ENCODE measurements at regions of chrX and their contacts with region 1.

Region 1: DNA sequence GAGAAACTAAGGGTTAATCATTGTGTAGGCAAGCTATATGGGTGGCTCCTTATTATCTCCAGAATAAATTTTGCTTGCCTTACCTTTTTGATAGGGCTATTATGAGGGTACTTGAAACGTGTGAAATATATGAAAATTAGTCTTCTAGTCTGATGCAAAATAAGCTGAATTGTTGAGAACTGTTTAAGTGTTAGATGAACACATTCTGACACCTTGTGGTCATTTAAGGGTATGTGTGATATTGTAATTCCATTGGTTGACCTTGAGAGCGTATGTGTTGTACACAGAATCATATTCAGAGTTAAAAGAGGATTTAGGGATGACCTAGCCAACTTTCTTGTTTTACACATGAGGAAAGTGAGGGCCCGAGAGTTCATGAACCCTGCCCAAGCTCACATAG is 44.6 kb upstream of the LINC00632 start:
- DNase-seq: peak; percentile 59
- H3K4me3 Mint-ChIP-seq: no peak overlapping the region
- H3K27ac Mint-ChIP-seq: no peak overlapping the region
- H3K4me1 Mint-ChIP-seq: peaks cover 8% of the 10 kb centered on the region
- H3K27me3 Mint-ChIP-seq: peaks cover 33% of the 10 kb centered on the region
- CTCF ChIP-seq: peak; percentile 45

Region 2: GRCh38 chrX:140034916-140035315 is 630.0 kb before region 1 on chrX:
- CTCF ChIA-PET with region 1: interaction called, 6 read pairs
- POLR2A ChIA-PET with region 1: interaction called, 4 read pairs
- intact Hi-C with region 1: loop called (anchors 1 kb)
- DNase-seq: peak; percentile 33
- H3K4me3 Mint-ChIP-seq: no peak overlapping the region
- H3K27ac Mint-ChIP-seq: no peak overlapping the region
- H3K4me1 Mint-ChIP-seq: peaks cover 5% of the 10 kb centered on the region
- H3K27me3 Mint-ChIP-seq: peaks cover 21% of the 10 kb centered on the region
- CTCF ChIP-seq: peak; percentile 37

Region 3: DNA sequence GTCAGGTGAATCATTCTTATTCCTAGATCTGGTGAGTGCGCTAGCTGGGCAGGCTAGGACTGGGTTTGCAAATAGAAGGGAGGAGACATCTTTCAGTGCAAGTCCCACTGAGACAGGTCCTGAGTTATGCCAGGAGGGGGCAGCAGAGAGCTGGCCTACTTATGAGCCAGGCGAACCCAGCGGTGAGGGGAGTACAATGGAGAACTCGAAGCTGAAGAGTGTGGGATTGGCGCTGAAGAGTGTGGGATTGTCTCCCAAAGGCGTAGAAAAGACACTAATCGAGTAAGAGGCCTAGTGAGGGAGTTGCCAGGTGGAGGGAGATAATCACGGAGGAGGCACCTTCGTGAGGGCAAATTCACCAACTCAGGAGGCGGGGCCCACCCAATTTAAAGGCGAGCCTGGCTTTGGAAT is 607.9 kb before region 1 on chrX:
- CTCF ChIA-PET with region 1: interaction called, 221 read pairs
- POLR2A ChIA-PET with region 1: interaction called, 3 read pairs
- intact Hi-C with region 1: loop called (anchors 1 kb)
- DNase-seq: peak; percentile 86
- H3K4me3 Mint-ChIP-seq: no peak overlapping the region
- H3K27ac Mint-ChIP-seq: no peak overlapping the region
- H3K4me1 Mint-ChIP-seq: peaks cover 6% of the 10 kb centered on the region
- H3K27me3 Mint-ChIP-seq: peaks cover 15% of the 10 kb centered on the region
- CTCF ChIP-seq: peak; percentile 83

Region 4: DNA sequence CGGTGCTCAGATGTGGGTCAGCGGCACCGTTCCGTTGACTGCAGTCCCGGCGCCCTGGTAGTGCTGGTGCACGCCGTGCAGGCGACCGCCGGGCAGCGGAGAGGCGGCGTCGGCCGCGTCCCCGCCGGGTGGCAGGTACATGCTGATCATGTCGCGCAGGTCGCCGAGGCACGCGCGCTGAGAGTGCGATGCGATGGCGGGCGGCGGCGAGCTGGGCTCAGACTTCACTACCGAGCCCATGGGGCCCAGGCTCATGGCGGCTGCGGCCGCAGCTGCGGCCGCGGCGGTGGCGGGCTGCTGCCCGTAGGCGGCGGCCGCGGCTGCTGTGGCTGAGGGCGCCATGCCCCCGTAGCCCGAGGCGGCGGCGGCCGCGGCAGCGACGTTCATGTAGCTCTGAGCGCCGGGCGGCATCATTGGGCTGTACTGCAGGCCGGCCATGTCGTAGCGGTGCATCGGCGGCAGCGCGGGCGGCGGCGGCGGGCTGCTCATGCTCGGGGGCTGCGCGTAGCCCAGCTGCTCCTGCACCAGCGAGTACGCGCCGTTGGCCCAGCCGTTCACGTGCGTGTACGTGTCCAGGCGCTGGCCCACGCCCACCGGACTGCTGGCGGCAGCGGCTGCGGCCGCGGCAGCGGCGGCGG is 161.1 kb before region 1 on chrX:
- CTCF ChIA-PET with region 1: no interaction called
- POLR2A ChIA-PET with region 1: no interaction called
- intact Hi-C with region 1: no loop called
- DNase-seq: no peak
- H3K4me3 Mint-ChIP-seq: no peak overlapping the region
- H3K27ac Mint-ChIP-seq: no peak overlapping the region
- H3K4me1 Mint-ChIP-seq: peaks cover 6% of the 10 kb centered on the region
- H3K27me3 Mint-ChIP-seq: peaks cover 8% of the 10 kb centered on the region
- CTCF ChIP-seq: no peak

Region 5: GRCh38 chrX:140526171-140526570 is 138.8 kb before region 1 on chrX:
- CTCF ChIA-PET with region 1: interaction called, 4 read pairs
- POLR2A ChIA-PET with region 1: no interaction called
- intact Hi-C with region 1: loop called (anchors 1 kb)
- DNase-seq: peak; percentile 45
- H3K4me3 Mint-ChIP-seq: peak overlapping the region; percentile 29
- H3K27ac Mint-ChIP-seq: no peak overlapping the region
- H3K4me1 Mint-ChIP-seq: peaks cover 17% of the 10 kb centered on the region
- H3K27me3 Mint-ChIP-seq: no peaks in the 10 kb centered on the region
- CTCF ChIP-seq: peak; percentile 14

Region 6: DNA sequence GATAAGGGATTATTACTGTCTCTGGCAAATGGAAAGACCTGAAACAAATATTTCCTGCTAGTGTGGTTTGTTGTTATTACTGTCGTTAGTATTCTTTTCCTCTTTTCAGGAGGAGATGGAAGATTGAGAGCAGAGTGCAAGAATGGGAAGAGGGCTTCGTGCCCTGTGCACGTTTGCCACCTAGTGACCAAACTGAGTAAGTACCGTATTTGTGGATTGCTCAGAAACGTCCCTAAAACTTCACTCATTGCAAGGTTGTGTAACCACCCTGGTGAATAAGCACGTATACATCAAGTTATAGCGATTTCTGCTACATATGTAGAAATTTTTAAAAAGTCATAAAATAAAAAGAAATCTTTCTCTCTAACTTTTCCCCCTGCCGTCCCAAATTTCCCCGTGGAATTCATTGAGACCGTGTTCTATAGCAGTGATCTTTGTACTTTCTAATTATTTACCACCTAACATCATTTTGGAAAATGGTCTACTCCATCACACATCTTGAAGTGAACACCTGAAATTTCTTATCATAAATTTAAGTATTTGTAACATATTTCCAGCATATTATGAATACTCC is 68.9 kb after region 1 on chrX:
- CTCF ChIA-PET with region 1: interaction called, 5 read pairs
- POLR2A ChIA-PET with region 1: no interaction called
- intact Hi-C with region 1: loop called (anchors 1 kb)
- DNase-seq: peak; percentile 75
- H3K4me3 Mint-ChIP-seq: no peak overlapping the region
- H3K27ac Mint-ChIP-seq: no peak overlapping the region
- H3K4me1 Mint-ChIP-seq: no peaks in the 10 kb centered on the region
- H3K27me3 Mint-ChIP-seq: no peaks in the 10 kb centered on the region
- CTCF ChIP-seq: peak; percentile 82

Region 7: DNA sequence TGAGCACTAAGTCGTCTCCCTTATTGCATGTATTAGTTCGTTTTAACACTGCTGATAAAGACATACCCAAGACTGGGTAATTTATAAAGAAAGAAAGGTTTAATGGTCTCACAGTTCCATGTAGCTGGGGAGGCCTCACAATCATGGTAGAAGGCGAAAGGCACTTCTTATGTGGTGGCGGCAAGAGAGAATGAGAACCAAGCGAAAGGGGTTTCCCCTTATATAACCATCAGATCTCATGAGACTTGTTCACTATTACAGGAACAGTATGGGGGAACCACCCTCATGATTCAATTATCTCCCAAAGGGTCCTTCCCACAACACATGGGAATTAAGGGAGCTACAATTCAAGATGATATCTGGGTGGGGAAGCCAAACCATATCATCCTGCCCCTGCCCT is 129.7 kb after region 1 on chrX:
- CTCF ChIA-PET with region 1: no interaction called
- POLR2A ChIA-PET with region 1: no interaction called
- intact Hi-C with region 1: no loop called
- DNase-seq: no peak
- H3K4me3 Mint-ChIP-seq: no peak overlapping the region
- H3K27ac Mint-ChIP-seq: no peak overlapping the region
- H3K4me1 Mint-ChIP-seq: peaks cover 8% of the 10 kb centered on the region
- H3K27me3 Mint-ChIP-seq: no peaks in the 10 kb centered on the region
- CTCF ChIP-seq: no peak

Measured in MCF 10A (cell line).